Ovary (tissue), 10 donors: ENCODE measurements at regions of chr16 and their contacts with region 1.

Region 1: GRCh38 chr16:20849587-20850390 is 43.5 kb downstream of the REXO5 start:
- DNase-seq: peak; percentile 50 to 81 (median 73)
- H3K4me3 ChIP-seq: no peak overlapping the region
- H3K27ac ChIP-seq: no peak overlapping the region
- H3K4me1 ChIP-seq: peaks cover 6% of the 10 kb centered on the region
- H3K27me3 ChIP-seq: no peaks in the 10 kb centered on the region
- CTCF ChIP-seq: peak; percentile 76 to 90 (median 90)
- EP300 ChIP-seq: no peak
- POLR2A ChIP-seq: no peak

Region 2: DNA sequence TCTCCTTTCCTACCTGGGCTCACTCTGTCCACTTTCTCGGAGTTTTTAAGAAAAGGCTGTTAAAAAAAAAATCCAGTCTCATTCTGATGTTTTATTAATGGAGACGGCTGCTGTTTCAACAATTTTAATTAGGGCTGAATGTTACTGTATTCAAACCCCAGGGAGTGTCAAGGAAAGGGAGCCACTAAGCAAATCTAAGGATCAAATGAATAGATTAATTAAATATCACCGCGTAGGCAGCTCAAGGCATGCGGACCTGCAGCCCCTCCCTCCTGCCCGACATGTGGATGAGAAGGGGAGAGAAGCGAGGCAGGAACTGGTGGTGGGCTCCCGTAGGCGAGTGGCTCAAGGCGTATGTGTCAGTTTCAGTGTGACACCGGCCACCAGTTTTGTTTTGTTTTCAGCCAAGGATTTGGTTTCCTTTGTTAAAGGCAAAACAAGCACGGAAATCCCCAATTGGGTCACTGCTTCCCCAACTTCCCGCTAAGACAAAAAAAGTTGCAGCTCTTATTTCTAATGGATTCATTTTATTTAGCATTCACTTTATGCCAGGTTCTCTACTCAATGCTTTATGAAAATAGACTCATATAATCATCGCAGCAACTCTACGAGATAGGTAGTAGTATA is 633.1 kb before region 1 on chr16:
- intact Hi-C with region 1: loop called in 1 of 4 experiments (anchors 5 kb)
- DNase-seq: no peak
- H3K4me3 ChIP-seq: no peak overlapping the region
- H3K27ac ChIP-seq: no peak overlapping the region
- H3K4me1 ChIP-seq: no peaks in the 10 kb centered on the region
- H3K27me3 ChIP-seq: no peaks in the 10 kb centered on the region
- CTCF ChIP-seq: no peak
- EP300 ChIP-seq: no peak
- POLR2A ChIP-seq: no peak

Region 3: DNA sequence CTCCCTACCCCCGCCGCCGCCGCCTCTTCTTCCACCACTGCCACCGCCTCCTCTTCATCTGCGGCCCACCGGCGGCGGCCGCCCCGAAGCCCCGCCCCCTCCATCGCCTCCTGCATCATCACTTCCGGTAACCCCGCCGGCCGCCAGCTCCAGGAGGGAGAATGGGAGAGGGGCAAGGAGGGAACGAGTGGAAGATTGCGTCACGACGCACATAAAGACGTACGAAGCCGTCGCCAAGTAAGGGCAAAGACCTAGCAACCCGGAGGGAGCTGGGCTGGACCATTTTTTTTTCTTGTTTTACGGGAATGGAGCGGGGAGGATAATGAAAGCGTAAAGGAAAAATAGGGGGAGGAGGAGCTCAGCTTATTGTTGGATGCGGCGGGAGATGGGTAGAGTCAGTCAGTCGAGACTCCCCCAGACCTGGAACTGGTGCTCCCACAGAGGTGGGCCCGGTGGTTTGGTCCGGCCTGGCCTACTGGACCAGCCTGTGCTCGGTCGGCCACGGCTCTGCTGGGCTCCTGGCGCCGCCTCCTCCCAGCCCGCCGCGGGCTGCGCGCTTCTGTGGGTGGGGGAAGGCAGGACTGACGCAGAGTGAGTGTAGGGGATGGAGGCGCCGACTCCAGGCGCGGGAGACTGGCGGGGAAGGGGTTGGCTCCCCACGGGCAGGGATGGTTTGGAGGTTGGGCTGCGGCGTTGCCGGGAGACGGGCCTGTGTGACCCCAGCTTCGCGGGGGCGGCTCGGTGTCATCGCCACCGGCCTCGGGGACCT is 50.7 kb after region 1 on chr16 and contains the starts of genes DCUN1D3 and LYRM1:
- intact Hi-C with region 1: loop called in 2 of 4 experiments (anchors 5 kb)
- DNase-seq: peak; percentile 97 to 98 (median 98)
- H3K4me3 ChIP-seq: peak within 1 kb of the TSS; percentile 83
- H3K27ac ChIP-seq: peak within 1 kb of the TSS; percentile 87 to 96
- H3K4me1 ChIP-seq: peaks cover 9% of the 10 kb centered on the region
- H3K27me3 ChIP-seq: no peaks in the 10 kb centered on the region
- CTCF ChIP-seq: no peak
- EP300 ChIP-seq: peak; percentile 47
- POLR2A ChIP-seq: peak; percentile 92
- total RNA-seq, gene DCUN1D3: 7.3 to 18.2 (median 14.7) TPM
- total RNA-seq, gene LYRM1: 31.6 to 53.4 (median 42.0) TPM

Region 4: GRCh38 chr16:20910781-20911321 is 61.1 kb after region 1 on chr16:
- intact Hi-C with region 1: loop called in 1 of 4 experiments (anchors 5 kb)
- DNase-seq: no peak
- H3K4me3 ChIP-seq: no peak overlapping the region
- H3K27ac ChIP-seq: no peak overlapping the region
- H3K4me1 ChIP-seq: peaks cover 16% of the 10 kb centered on the region
- H3K27me3 ChIP-seq: no peaks in the 10 kb centered on the region
- CTCF ChIP-seq: no peak
- EP300 ChIP-seq: no peak
- POLR2A ChIP-seq: no peak

Region 5: DNA sequence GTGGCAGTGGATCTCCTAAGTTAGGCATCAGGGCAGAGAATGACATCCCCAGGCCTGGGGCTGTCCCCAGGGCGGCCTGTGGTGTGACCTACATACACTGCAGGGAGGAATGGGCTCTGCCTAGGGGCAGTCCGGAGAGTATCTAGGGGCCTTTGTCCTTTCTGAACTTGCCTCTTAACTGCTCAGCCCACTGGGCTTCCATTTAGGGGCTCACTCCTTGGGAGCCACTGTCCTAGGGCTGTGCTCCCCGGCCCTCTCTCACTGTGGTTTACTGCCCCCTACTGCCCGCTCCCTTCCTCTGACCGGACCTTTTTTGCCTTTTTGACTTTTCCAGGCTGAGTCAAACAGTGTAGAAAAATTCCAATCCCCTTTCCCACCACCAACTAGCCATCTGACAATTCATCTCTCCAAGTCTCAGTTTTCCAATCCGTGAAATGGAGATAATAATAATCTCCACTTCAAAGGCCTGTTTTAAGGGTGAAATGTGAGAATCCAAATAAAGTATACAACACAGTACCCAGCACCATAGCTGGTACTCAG is 234.0 kb after region 1 on chr16:
- intact Hi-C with region 1: loop called in 3 of 4 experiments (anchors 5 to 10 kb)
- DNase-seq: peak; percentile 21 to 64 (median 45)
- H3K4me3 ChIP-seq: no peak overlapping the region
- H3K27ac ChIP-seq: no peak overlapping the region
- H3K4me1 ChIP-seq: no peaks in the 10 kb centered on the region
- H3K27me3 ChIP-seq: no peaks in the 10 kb centered on the region
- CTCF ChIP-seq: peak in 2 of 3 donors; percentile 15 to 46
- EP300 ChIP-seq: no peak
- POLR2A ChIP-seq: no peak

Region 6: GRCh38 chr16:21158208-21159110 is 308.7 kb after region 1 on chr16 and contains the start of gene LDAF1:
- intact Hi-C with region 1: loop called in 1 of 4 experiments (anchors 10 kb)
- DNase-seq: peak; percentile 81 to 90 (median 83)
- H3K4me3 ChIP-seq: peak within 1 kb of the TSS; percentile 64
- H3K27ac ChIP-seq: peak within 1 kb of the TSS; percentile 64 to 70
- H3K4me1 ChIP-seq: peaks cover 11% of the 10 kb centered on the region
- H3K27me3 ChIP-seq: no peaks in the 10 kb centered on the region
- CTCF ChIP-seq: no peak
- EP300 ChIP-seq: no peak
- POLR2A ChIP-seq: no peak
- total RNA-seq, gene LDAF1: 33.5 to 89.5 (median 67.4) TPM

Region 7: GRCh38 chr16:21300309-21301167 is 450.7 kb after region 1 on chr16:
- intact Hi-C with region 1: loop called in 1 of 4 experiments (anchors 5 kb)
- DNase-seq: peak; percentile 88 to 97 (median 96)
- H3K4me3 ChIP-seq: peak overlapping the region; percentile 54
- H3K27ac ChIP-seq: peak overlapping the region; percentile 22 to 60
- H3K4me1 ChIP-seq: no peaks in the 10 kb centered on the region
- H3K27me3 ChIP-seq: no peaks in the 10 kb centered on the region
- CTCF ChIP-seq: peak; percentile 88 to 89 (median 89)
- EP300 ChIP-seq: no peak
- POLR2A ChIP-seq: no peak